Caco-2 (cell line): ENCODE measurements at regions of chrX and their contacts with region 1.

Region 1: GRCh38 chrX:108304210-108304609 is 134.0 kb downstream of the COL4A6 start:
- DNase-seq: peak in 1 of 2 experiments; percentile 16
- H3K4me3 ChIP-seq: no peak overlapping the region
- H3K4me3 Mint-ChIP-seq: no peak overlapping the region
- H3K27ac Mint-ChIP-seq: no peak overlapping the region
- H3K4me1 ChIP-seq: peaks cover 22% of the 10 kb centered on the region
- H3K4me1 Mint-ChIP-seq: peaks cover 4% of the 10 kb centered on the region
- H3K27me3 ChIP-seq: no peaks in the 10 kb centered on the region
- H3K27me3 Mint-ChIP-seq: no peaks in the 10 kb centered on the region
- CTCF ChIP-seq: peak; percentile 37 to 50

Region 2: DNA sequence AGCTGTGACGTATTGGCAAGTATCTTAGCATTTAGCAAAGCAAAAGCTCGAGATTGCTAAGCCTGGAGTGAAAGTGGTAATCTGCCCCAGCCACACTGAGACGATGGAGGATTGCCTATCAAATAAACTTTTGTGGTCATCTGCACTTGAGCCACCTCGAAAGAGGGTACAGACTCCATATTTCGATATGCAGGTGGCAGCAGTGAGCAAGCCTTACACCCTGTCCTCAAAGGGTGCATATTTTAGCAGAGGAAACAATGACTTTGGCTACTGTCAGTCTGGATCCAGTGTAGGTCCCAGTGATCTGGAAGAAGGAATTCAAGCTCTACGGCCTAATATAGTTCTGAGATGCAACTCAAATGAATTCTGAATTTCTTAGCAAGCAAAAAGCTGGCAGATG is 58.8 kb before region 1 on chrX:
- CTCF ChIA-PET with region 1: no interaction called
- POLR2A ChIA-PET with region 1: no interaction called
- intact Hi-C with region 1: loop called (anchors 5 kb)
- DNase-seq: no peak
- H3K4me3 ChIP-seq: no peak overlapping the region
- H3K4me3 Mint-ChIP-seq: no peak overlapping the region
- H3K27ac Mint-ChIP-seq: no peak overlapping the region
- H3K4me1 ChIP-seq: no peaks in the 10 kb centered on the region
- H3K4me1 Mint-ChIP-seq: peaks cover 6% of the 10 kb centered on the region
- H3K27me3 ChIP-seq: no peaks in the 10 kb centered on the region
- H3K27me3 Mint-ChIP-seq: no peaks in the 10 kb centered on the region
- CTCF ChIP-seq: no peak

Region 3: DNA sequence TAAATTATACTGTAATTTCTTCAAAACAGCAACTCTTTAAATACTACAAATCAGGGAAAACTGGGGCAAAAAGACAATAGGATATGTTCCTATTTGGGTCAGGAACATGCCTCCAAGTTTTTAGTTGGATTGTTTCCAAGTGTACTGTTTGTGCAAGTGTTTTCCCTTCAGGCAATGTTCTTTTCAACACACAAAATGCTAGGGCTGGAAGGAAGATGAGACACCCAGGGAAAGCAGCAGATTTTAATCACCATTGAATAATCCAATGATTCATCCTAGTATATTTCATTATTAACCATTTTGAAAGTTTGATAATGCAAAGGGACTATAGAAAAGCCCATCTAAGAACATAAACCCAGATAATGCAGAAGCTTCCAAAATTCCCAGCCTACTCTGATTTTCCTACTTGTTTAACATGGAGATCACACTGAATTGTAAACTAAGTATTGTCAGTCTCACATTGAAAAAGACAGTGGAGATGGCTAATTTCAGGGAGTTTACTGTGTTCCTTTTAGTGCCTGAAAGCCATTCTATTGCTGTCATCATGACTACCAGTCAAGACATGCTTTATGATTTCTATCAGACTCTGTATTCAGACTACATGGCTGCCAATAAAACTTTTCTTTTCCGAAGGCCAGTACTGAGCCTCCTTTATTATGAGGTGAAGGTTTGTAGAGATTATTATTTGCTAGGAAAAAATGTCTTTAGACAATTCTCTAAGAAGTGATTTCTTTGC is 95.4 kb after region 1 on chrX:
- CTCF ChIA-PET with region 1: no interaction called
- POLR2A ChIA-PET with region 1: no interaction called
- intact Hi-C with region 1: loop called (anchors 1 kb)
- DNase-seq: no peak
- H3K4me3 ChIP-seq: no peak overlapping the region
- H3K4me3 Mint-ChIP-seq: no peak overlapping the region
- H3K27ac Mint-ChIP-seq: peak overlapping the region; percentile 20
- H3K4me1 ChIP-seq: peaks cover 35% of the 10 kb centered on the region
- H3K4me1 Mint-ChIP-seq: peaks cover 28% of the 10 kb centered on the region
- H3K27me3 ChIP-seq: no peaks in the 10 kb centered on the region
- H3K27me3 Mint-ChIP-seq: no peaks in the 10 kb centered on the region
- CTCF ChIP-seq: no peak